ENCODE measurements at regions of chr4 and their contacts with region 1.

Region 1: DNA sequence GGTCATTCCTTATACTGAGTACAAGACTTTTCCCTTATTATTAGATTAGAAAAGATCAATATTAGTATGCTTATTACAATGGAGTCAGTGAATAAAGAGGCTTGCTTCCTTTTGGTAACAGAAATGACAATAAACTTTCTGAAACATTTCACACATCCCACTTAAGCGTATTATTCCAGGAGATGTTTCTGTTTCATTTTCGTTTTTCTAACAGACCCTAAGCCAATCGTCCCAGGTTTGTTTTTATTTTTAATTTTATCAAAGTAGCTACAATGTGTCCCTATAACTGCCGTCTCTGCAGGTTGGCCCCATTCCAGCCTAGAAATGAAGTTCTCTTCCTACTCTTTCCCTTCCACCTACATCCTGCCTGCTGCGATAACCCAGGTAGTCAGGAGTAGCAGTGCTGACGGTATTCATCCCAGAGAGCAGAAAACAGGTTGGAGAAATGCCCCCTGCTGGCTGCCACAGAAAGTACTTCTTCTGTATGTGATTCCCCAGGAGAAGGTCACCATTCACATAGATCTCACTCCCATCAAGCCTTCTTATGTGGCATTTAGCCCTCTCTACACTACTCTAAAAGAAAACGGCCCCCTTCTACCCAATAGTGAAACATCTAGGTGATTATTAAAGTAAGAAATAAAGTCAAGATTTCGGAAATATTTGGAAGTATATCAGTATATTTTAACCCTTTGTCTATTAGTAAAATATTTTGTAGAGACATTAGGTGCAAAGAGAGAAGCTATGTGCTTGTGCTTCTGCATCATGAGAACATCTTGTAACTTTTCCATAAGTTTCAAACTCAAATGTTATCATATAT is 40.4 kb downstream of the ENPEP start:
- DNase-seq: peak; percentile 76
- H3K4me3 Mint-ChIP-seq: peak overlapping the region; percentile 79
- H3K27ac Mint-ChIP-seq: no peak overlapping the region
- H3K4me1 Mint-ChIP-seq: peaks cover 9% of the 10 kb centered on the region
- H3K27me3 Mint-ChIP-seq: no peaks in the 10 kb centered on the region

Region 2: GRCh38 chr4:109815151-109816081 is 700.9 kb before region 1 on chr4 and contains the start of gene GAR1:
- CTCF ChIA-PET with region 1: no interaction called
- intact Hi-C with region 1: loop called (anchors 10 kb)
- DNase-seq: peak; percentile 93
- H3K4me3 Mint-ChIP-seq: peak within 1 kb of the TSS; percentile 99
- H3K27ac Mint-ChIP-seq: peak within 1 kb of the TSS; percentile 95
- H3K4me1 Mint-ChIP-seq: peaks cover 47% of the 10 kb centered on the region
- H3K27me3 Mint-ChIP-seq: no peaks in the 10 kb centered on the region
- total RNA-seq, gene GAR1: 18.9 to 24.4 TPM

Region 3: DNA sequence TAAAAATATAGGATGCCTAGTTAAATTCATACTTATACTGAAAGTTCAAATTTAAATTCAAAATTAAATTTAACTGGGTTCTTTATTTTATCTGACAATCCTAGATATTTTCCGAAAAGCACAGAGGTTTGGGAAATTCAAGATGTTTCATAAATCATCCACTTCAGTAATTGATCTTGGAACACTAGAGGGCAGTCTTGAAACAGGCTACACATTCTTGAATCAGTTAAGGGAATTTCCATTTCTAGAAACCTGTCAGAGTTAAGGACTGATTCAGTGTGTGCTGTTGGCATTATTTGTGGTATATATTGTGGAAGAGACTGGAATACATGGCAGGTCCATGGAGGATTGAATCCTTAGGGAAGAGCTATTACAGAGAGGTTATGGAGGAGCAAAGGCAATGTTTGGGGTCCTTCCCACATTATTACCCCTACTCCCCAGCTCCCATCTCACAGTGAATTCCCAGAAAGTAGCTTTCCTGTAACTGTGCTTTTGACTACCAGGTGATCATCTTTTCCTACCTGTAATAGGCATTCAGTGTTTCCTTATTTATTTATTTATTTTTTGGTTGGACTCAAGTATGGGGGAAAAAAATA is 510.8 kb before region 1 on chr4:
- CTCF ChIA-PET with region 1: interaction called, 371 read pairs
- intact Hi-C with region 1: loop called (anchors 1 kb)
- DNase-seq: no peak
- H3K4me3 Mint-ChIP-seq: no peak overlapping the region
- H3K27ac Mint-ChIP-seq: no peak overlapping the region
- H3K4me1 Mint-ChIP-seq: peaks cover 8% of the 10 kb centered on the region
- H3K27me3 Mint-ChIP-seq: peaks cover 3% of the 10 kb centered on the region

Region 4: GRCh38 chr4:110211007-110211769 is 305.1 kb before region 1 on chr4:
- CTCF ChIA-PET with region 1: interaction called, 3 read pairs
- intact Hi-C with region 1: loop called (anchors 2 kb)
- DNase-seq: peak; percentile 38
- H3K4me3 Mint-ChIP-seq: no peak overlapping the region
- H3K27ac Mint-ChIP-seq: no peak overlapping the region
- H3K4me1 Mint-ChIP-seq: no peaks in the 10 kb centered on the region
- H3K27me3 Mint-ChIP-seq: no peaks in the 10 kb centered on the region

Region 5: GRCh38 chr4:110310795-110311194 is 205.5 kb before region 1 on chr4:
- CTCF ChIA-PET with region 1: interaction called, 15 read pairs
- intact Hi-C with region 1: loop called (anchors 1 kb)
- DNase-seq: no peak
- H3K4me3 Mint-ChIP-seq: no peak overlapping the region
- H3K27ac Mint-ChIP-seq: no peak overlapping the region
- H3K4me1 Mint-ChIP-seq: no peaks in the 10 kb centered on the region
- H3K27me3 Mint-ChIP-seq: peaks cover 20% of the 10 kb centered on the region

Region 6: DNA sequence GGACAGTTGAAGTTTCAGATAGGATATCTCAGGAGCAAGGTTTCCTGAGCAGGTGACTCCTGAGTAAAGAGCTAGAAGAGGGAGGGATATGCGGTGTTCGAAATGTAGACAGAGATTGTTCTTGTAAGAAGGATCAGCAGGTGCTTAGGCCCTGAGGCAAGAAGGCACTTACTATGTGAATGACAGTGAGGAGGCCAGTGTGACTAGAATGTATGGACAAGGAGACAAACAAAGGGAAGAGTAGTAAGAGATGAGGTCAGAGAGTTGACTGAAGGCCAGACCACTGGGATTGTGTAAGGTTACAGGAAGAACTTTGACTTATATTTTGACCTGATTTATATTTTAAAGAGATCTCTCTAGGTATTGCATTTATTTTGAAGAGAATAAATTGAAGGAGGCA is 158.8 kb before region 1 on chr4:
- CTCF ChIA-PET with region 1: no interaction called
- intact Hi-C with region 1: no loop called
- DNase-seq: no peak
- H3K4me3 Mint-ChIP-seq: no peak overlapping the region
- H3K27ac Mint-ChIP-seq: no peak overlapping the region
- H3K4me1 Mint-ChIP-seq: no peaks in the 10 kb centered on the region
- H3K27me3 Mint-ChIP-seq: peaks cover 6% of the 10 kb centered on the region

Region 7: DNA sequence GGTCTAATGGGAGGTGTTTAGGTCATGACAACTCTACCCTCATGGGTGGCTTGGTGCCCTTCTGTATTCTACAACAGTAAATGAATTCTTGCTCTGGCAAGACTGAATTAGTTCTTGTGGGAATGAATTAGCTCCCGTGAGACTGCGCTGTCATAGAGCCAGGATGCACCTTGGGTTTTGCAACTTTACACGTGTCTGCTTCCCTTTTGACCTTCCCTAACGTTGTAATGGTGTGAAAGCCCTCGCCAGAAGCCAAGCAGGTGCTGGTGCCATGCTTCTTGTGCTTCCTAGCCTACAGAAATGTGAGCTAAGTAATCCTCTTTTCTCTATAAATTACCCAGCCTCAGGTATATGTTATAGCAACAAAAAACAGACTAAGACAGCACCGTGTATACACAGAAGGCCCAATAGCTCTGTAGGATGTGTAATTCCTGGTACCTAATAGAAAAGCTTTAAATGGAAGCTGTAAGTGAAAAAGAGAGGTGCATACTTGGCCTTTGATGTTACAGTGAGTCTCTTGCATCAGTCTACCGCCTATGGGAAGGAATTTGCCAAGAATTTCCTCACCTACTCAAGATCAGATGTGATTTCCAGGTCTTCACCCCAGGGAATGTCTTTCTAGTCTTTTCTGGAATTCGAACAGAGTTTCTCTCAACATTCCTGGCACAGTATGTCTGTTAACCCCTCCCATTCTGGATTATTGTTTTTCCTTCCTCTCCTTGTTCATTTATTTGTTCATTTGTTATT is 43.6 kb before region 1 on chr4:
- CTCF ChIA-PET with region 1: no interaction called
- intact Hi-C with region 1: no loop called
- DNase-seq: no peak
- H3K4me3 Mint-ChIP-seq: no peak overlapping the region
- H3K27ac Mint-ChIP-seq: no peak overlapping the region
- H3K4me1 Mint-ChIP-seq: no peaks in the 10 kb centered on the region
- H3K27me3 Mint-ChIP-seq: peaks cover 17% of the 10 kb centered on the region

Region 8: DNA sequence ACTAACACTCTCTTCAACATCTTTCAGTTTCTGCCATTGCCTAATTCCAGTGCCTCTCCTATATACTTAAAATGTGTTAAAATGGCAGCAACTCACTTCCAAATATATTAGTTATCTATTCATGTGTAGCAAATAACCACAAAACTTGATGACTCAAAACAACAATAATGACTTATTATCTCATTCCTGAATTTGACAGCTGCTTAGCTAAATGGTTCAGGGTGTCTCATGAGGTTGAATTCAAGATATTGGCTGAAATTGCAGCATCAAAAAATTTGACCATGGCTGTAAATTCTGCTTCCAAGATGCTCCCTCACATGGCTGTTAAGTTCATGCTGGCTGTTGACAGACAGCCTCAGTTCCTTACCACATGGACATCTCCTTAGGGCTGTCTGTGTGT is 81.3 kb after region 1 on chr4:
- CTCF ChIA-PET with region 1: no interaction called
- intact Hi-C with region 1: no loop called
- DNase-seq: no peak
- H3K4me3 Mint-ChIP-seq: no peak overlapping the region
- H3K27ac Mint-ChIP-seq: no peak overlapping the region
- H3K4me1 Mint-ChIP-seq: no peaks in the 10 kb centered on the region
- H3K27me3 Mint-ChIP-seq: peaks cover 12% of the 10 kb centered on the region

Measured in activated naive CD4-positive, alpha-beta T cell treated with anti-CD3 and anti-CD28 coated beads for 36 hours (primary cell).